A549 (cell line): ENCODE measurements at regions of chr22 and their contacts with region 1.

Region 1: DNA sequence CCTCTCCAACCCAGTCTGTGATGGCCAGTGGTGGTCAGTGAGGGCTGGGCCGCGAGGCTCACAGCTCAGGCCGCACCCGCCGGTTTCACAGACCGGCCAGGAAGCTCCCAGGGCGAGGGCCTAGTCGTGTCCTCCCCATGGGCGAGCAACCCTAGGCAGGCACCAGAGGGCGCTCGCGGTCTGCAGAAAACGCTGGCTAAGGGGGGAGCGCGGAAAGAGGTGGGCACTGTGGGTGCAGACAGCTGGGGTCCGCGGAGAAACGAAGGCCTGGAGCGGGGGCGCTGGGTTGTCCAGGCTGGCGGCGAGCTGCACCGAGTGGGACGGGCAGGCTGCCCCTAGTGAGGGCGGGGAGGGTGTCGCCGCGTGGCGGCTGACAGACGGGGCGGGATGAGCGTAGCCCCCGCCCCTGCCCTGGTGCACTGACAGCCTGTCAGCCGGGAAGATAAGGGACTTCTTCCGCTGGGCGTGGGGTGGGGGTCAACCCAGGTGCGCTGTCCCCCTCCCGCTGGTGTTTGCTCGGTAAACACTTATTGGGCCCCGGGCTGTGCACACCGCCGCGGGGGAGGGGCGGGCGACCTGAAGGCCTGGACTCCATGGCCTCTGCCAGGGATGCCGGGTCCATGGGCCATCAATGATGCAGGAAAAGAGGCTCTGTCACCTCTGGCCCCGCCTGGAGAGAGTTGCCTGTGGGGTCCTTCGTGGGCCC is 7.5 kb downstream of the GP1BB start:
- DNase-seq: peak; percentile 58 to 73
- ATAC-seq: peak; percentile 80 to 95
- H3K4me3 ChIP-seq: peak overlapping the region; percentile 47
- H3K27ac ChIP-seq: peak overlapping the region; percentile 50 to 79; a peak in 5 of 6 replicates
- H3K4me1 ChIP-seq: no peaks in the 10 kb centered on the region
- CTCF ChIP-seq: peak; percentile 79
- EP300 ChIP-seq: no peak
- POLR2A ChIP-seq: no peak
- RAD21 ChIP-seq: peak; percentile 92 to 97

Region 2: GRCh38 chr22:19745155-19746101 is 14.6 kb after region 1 on chr22:
- CTCF ChIA-PET with region 1: interaction called, 86 read pairs
- POLR2A ChIA-PET with region 1: no interaction called
- DNase-seq: no peak
- ATAC-seq: no peak
- H3K4me3 ChIP-seq: no peak overlapping the region
- H3K27ac ChIP-seq: peak overlapping the region in 1 of 2 experiments; percentile 38; a peak in 1 of 6 replicates
- H3K4me1 ChIP-seq: peaks cover 6% of the 10 kb centered on the region; the same call in 2 of the 3 replicates
- CTCF ChIP-seq: no peak
- EP300 ChIP-seq: no peak
- POLR2A ChIP-seq: no peak
- RAD21 ChIP-seq: no peak

Region 3: DNA sequence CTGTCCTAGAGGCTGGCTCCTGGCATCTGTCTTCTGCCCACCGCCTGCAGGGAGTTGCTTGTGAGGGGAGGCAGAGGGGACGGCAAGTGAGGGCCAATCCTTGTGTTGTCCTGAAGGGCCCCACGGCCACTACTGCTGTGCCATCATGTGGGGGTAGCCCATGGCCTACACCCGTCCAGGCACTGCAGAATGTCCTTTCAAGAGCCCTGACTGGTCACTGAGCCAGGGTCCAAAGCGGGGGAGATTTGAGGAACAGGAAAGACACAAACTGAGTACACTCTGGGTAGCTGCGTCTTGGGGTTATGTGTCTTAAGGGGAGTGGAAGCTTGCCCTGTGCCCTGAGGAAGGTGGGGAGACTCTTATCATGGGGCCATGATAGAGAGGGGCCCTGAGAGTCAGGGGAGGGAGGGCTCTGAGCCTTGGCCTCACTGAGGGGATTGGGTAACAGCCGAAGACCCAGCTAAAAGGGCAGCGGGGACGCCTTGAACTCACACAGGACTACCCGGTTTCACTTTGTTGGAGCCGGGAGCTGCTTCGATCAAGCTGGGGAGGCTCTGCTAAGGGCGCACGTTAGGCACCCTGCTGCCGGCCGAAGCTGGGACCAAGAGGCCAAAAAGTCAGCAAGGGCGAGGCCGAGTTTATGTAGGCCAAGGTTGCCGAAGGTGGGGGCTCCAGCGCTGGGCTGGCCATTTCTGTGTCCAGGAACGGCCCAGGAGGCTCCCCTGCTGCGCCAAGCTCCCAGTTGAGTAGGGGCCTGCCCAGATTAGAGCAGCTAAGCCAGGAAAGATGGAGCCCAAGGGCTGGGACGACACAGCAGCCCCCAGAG is 31.7 kb after region 1 on chr22:
- CTCF ChIA-PET with region 1: interaction called, 30 read pairs
- POLR2A ChIA-PET with region 1: no interaction called
- DNase-seq: no peak
- ATAC-seq: no peak; a peak in 2 of 6 replicates
- H3K4me3 ChIP-seq: no peak overlapping the region
- H3K27ac ChIP-seq: no peak overlapping the region
- H3K4me1 ChIP-seq: no peaks in the 10 kb centered on the region; the same call in 2 of the 3 replicates
- CTCF ChIP-seq: no peak
- EP300 ChIP-seq: no peak
- POLR2A ChIP-seq: no peak
- RAD21 ChIP-seq: no peak

Region 4: DNA sequence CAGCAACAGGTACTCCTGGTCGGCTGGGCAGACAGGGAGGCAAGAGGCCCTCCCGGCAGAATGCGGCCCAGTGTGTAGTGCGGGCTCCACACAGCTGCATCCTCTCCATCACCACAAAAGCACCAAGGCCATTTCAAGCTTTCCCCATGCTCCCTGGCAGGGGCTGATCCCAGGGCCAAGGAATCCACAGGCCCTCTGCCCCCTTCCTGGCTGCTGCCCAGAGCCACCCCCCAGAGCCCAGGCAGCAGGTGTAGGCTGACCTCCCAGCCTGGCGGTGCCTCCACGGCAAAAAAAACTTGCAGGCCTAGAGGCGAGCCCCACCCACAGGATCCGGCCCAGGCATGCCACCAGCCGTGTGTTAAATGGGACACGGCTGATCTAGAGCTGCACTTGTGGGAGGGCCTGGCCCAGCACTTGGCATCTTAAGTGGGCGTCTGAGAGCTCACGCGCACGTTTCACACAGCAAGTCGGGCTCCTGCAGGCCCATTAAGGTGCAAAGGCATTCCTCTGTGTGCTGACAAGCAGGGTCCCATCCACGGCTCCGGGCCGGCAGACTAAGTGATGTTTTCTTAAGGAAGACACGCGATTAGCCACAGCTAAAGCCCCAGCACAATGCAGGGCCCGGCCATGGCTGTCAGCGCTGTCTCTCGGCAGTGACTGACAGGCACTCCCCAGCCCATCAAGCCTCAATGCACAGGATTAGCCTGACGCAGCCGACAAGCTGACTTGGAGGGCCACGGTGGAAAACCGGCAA is 143.7 kb after region 1 on chr22:
- CTCF ChIA-PET with region 1: interaction called, 15 read pairs
- POLR2A ChIA-PET with region 1: no interaction called
- DNase-seq: no peak
- ATAC-seq: no peak
- H3K4me3 ChIP-seq: no peak overlapping the region
- H3K27ac ChIP-seq: peak overlapping the region in 1 of 2 experiments; percentile 92; a peak in 3 of 6 replicates
- H3K4me1 ChIP-seq: peaks cover 44% of the 10 kb centered on the region
- CTCF ChIP-seq: no peak
- EP300 ChIP-seq: no peak
- POLR2A ChIP-seq: no peak
- RAD21 ChIP-seq: no peak

Region 5: DNA sequence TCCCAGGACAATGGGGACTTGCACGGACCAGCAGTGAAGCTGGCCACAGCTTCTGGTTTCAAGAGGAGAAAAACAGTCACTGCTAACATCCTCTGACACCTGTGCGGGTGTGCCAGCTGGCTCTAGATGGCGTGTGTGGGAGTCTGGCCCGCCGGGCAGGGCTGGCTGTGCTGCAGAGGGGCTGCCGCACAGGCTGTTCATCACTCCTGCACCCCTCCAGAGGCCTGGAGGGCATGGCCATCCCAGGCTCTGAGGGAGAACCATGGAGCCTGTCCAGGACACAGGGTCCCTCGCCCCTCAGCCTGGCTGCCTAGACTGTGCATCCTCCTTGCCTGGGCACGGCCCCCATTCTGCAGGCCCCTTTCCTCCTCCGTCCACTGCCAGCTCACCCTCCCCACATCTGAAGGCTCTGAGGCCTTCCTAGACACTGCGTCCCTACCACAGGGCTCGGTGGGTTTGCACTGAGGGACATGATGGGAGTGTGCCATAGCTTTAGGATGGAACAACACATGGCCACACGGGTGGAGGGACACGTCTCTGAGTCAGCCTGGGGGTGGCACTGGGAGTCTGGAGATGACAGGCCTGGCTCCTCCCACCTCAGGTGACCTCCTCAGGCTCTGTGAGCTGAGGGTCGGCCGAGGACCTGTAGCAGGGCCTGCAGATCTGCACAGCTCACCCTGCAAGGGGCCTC is 166.0 kb after region 1 on chr22:
- CTCF ChIA-PET with region 1: interaction called, 56 read pairs
- POLR2A ChIA-PET with region 1: no interaction called
- DNase-seq: no peak
- ATAC-seq: peak in 1 of 2 experiments; percentile 31; a peak in 3 of 6 replicates
- H3K4me3 ChIP-seq: no peak overlapping the region
- H3K27ac ChIP-seq: no peak overlapping the region
- H3K4me1 ChIP-seq: peaks cover 3% of the 10 kb centered on the region; the same call in 2 of the 3 replicates
- CTCF ChIP-seq: no peak
- EP300 ChIP-seq: no peak
- POLR2A ChIP-seq: no peak
- RAD21 ChIP-seq: no peak

Region 6: GRCh38 chr22:19930551-19931486 is 200.0 kb after region 1 on chr22:
- CTCF ChIA-PET with region 1: interaction called, 15 read pairs
- POLR2A ChIA-PET with region 1: no interaction called
- DNase-seq: no peak
- ATAC-seq: no peak
- H3K4me3 ChIP-seq: no peak overlapping the region
- H3K27ac ChIP-seq: no peak overlapping the region
- H3K4me1 ChIP-seq: no peaks in the 10 kb centered on the region
- CTCF ChIP-seq: no peak
- EP300 ChIP-seq: no peak
- POLR2A ChIP-seq: no peak
- RAD21 ChIP-seq: no peak

Region 7: GRCh38 chr22:19970479-19971275 is 239.9 kb after region 1 on chr22:
- CTCF ChIA-PET with region 1: interaction called, 10 read pairs
- POLR2A ChIA-PET with region 1: no interaction called
- DNase-seq: peak; percentile 57 to 62
- ATAC-seq: peak; percentile 44 to 79
- H3K4me3 ChIP-seq: no peak overlapping the region
- H3K27ac ChIP-seq: no peak overlapping the region
- H3K4me1 ChIP-seq: peaks cover 5% of the 10 kb centered on the region; the same call in 1 of the 3 replicates
- CTCF ChIP-seq: peak; percentile 70
- EP300 ChIP-seq: no peak
- POLR2A ChIP-seq: no peak
- RAD21 ChIP-seq: peak; percentile 72 to 76